ENCODE measurements at regions of chr4 and their contacts with region 1.

Region 1: DNA sequence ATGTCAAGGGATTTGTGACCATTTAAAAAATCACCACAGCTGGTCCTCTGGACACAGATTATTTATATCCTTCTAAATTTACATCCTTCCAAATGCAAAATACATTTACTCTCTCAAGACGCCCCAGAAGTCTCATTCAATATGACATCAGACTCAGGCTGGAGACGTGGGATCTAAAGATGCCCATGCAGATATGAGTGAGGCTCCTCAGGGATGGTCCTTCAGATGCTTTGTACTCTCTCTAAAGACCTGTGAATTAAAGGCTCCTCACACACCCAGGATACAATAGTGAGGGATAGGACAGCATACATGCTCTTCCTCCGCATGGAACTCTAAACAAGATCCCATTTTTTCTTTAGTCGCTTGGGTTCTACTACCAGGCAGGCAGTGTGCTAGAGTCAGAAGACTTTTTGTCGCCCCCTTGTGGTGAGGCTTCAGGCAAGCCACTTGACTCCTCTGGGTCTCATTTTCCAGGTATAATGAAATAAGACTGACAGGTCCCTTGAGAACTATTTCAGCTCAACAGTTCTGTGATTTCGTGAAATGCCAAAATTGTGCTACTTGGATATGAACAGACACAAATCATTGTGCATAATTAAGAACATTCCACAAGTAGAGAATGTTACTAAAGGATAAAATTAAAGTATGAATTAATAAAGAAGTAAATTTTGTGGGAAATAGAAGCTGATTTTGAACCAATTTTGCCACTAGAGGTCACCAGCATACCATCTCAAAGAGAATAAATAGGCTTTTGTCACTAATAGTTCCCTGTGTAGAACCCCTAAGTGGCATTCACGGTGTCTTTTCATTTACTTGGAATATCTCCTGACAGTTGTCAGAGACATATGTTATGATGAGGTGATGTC is 13.7 kb upstream of the SCOC start:
- DNase-seq: no peak
- ATAC-seq: peak; percentile 73

Region 2: GRCh38 chr4:140286456-140286855 is 73.3 kb before region 1 on chr4:
- intact Hi-C with region 1: no loop called
- DNase-seq: no peak
- ATAC-seq: no peak

Region 3: DNA sequence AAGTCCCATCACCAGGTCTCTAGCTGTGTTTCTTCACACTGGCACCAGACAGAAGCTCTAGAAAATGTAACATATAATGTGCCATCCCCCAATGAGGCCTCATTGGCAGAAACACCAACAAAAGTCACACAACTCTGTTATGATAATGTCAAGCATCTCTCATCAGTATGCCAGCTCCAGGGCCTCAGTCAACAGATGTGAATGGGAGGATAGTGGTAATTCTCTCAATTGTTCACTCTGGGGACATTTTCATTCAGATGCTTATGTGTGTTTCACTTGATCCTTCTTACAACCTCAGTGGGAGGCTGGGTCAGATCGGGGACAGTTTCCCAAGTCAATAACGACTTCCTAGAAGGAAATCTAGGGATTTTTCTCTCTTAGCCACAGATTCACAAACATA is 43.8 kb before region 1 on chr4:
- intact Hi-C with region 1: no loop called
- DNase-seq: no peak
- ATAC-seq: no peak

Region 4: GRCh38 chr4:140609548-140610425 is 250.0 kb after region 1 on chr4:
- intact Hi-C with region 1: loop called (anchors 5 kb)
- DNase-seq: no peak
- ATAC-seq: peak; percentile 76